GM12878 (cell line): ENCODE measurements at regions of chr1 and their contacts with region 1.

Region 1: DNA sequence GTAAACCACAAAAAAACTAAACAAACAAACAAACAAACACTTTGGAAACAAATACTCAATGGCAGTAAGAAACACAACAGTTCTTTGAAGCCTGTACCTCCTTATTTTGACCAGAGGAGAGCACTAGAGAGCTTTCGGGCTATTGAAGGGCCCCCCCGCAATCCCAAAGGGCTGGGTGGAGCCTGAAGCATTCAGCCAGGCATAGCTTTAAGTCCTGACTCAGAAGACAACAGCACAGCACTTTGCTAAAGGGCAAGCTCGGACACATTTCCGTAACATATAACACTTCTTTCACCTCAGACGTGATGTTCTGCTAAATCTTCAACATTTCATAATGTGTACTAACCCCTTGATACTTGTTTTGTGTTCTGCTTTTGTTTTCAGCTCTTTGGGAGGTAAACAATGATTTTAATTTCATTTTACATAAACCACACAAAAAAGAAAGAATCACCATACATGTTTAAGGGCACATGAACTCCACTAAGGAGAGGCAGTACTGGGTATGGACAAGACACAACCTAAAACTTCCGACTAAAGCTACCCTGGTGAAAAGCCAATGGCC is 9.7 kb upstream of the SHCBP1L start:
- DNase-seq: peak; percentile 62
- ATAC-seq: peak; percentile 100
- H3K4me3 ChIP-seq: peak overlapping the region; percentile 57; the same call in 1 of the 2 replicates
- H3K27ac ChIP-seq: peak overlapping the region; percentile 56
- H3K4me1 ChIP-seq: 0 out of 2 replicates have a peak, but pooled peaks cover 5% of the 10 kb centered on the region
- H3K27me3 ChIP-seq: no peaks in the 10 kb centered on the region
- CTCF ChIP-seq: peak; percentile 88 to 95 (median 93)
- EP300 ChIP-seq: no peak
- POLR2A ChIP-seq: peak; percentile 48; the same call in 1 of the 2 replicates
- RAD21 ChIP-seq: peak; percentile 99

Region 2: DNA sequence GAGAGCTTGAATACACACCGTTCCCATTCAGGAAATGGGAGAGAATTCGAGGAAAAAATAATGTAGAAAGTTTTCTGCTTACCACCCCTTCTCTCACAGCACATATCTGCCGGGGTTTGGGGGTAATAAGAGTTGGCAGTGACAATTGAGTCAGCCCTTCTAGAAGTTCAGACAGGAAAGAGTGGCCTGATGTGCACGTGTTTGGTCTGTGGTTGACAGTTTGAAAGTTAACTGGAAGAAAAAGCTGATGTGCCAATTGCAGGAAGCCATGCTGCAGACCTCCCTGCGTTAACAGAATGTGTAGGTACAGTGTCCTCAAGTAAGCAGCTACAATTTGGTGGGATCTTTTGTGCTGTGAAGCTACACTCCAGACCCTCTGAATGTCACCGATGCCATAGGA is 72.6 kb before region 1 on chr1:
- CTCF ChIA-PET with region 1: no interaction called
- POLR2A ChIA-PET with region 1: no interaction called
- RAD21 ChIA-PET with region 1: no interaction called
- SMC1A ChIA-PET with region 1: no interaction called
- in situ Hi-C with region 1: no loop called
- intact Hi-C with region 1: no loop called
- DNase-seq: no peak
- ATAC-seq: peak; percentile 41
- H3K4me3 ChIP-seq: no peak overlapping the region
- H3K27ac ChIP-seq: no peak overlapping the region
- H3K4me1 ChIP-seq: no peaks in the 10 kb centered on the region
- H3K27me3 ChIP-seq: no peaks in the 10 kb centered on the region
- CTCF ChIP-seq: no peak
- EP300 ChIP-seq: no peak
- POLR2A ChIP-seq: peak; percentile 43; the same call in 1 of the 2 replicates
- RAD21 ChIP-seq: no peak

Region 3: DNA sequence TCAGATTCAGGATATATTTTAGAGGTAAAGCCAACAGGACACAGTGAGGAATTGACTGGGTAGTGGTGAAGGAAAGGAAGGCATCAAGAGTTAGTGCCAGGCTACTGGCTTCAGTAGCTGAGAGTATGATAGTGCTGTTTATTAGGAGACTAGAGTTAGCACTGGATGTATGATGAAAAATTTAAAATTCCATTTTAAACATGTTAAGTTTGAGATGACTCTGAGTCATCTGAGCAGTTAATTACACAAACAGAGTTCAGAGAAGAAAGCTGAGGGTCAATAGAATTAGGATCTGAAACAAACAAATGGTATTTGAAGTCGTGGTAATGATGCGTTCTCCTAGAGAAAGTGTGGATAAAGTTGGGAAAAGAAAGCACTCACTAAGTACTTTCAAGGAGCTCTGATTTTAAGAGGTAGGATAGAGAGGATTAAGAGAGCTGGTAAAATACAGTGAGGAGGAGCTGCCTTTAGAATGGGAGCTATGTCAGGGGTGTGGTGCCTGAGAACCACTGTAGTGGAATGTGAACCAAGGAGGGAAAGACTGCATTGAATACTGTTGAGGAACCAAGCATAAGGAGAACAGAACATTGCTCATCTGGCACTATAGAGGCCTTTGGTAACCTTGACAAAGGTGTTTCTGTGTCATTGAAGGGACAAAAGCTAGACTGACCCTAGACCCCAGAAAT is 12.0 kb after region 1 on chr1:
- CTCF ChIA-PET with region 1: interaction called, 11 read pairs
- POLR2A ChIA-PET with region 1: interaction called, 5 read pairs
- RAD21 ChIA-PET with region 1: interaction called, 8 read pairs
- SMC1A ChIA-PET with region 1: interaction called, 12 read pairs
- in situ Hi-C with region 1: no loop called
- intact Hi-C with region 1: no loop called
- DNase-seq: no peak
- ATAC-seq: no peak
- H3K4me3 ChIP-seq: no peak overlapping the region
- H3K27ac ChIP-seq: no peak overlapping the region
- H3K4me1 ChIP-seq: no peaks in the 10 kb centered on the region
- H3K27me3 ChIP-seq: no peaks in the 10 kb centered on the region
- CTCF ChIP-seq: no peak
- EP300 ChIP-seq: no peak
- POLR2A ChIP-seq: no peak
- RAD21 ChIP-seq: no peak

Region 4: GRCh38 chr1:183070923-183071618 is 108.4 kb after region 1 on chr1:
- CTCF ChIA-PET with region 1: interaction called, 99 read pairs
- POLR2A ChIA-PET with region 1: interaction called, 7 read pairs
- RAD21 ChIA-PET with region 1: interaction called, 66 read pairs
- SMC1A ChIA-PET with region 1: interaction called, 76 read pairs
- in situ Hi-C with region 1: no loop called
- intact Hi-C with region 1: loop called (anchors 1 kb)
- DNase-seq: peak; percentile 94
- ATAC-seq: peak; percentile 90
- H3K4me3 ChIP-seq: peak overlapping the region; percentile 64
- H3K27ac ChIP-seq: peak overlapping the region; percentile 82
- H3K4me1 ChIP-seq: peaks cover 27% of the 10 kb centered on the region; the same call in 1 of the 2 replicates
- H3K27me3 ChIP-seq: no peaks in the 10 kb centered on the region
- CTCF ChIP-seq: peak in 1 of 3 experiments; percentile 36; a peak in 2 of 6 replicates
- EP300 ChIP-seq: peak; percentile 66 to 67; a peak in 2 of 4 replicates
- POLR2A ChIP-seq: no peak
- RAD21 ChIP-seq: peak; percentile 32

Region 5: GRCh38 chr1:183140633-183141032 is 178.0 kb after region 1 on chr1:
- CTCF ChIA-PET with region 1: interaction called, 4 read pairs
- POLR2A ChIA-PET with region 1: no interaction called
- RAD21 ChIA-PET with region 1: interaction called, 4 read pairs
- SMC1A ChIA-PET with region 1: interaction called, 14 read pairs
- in situ Hi-C with region 1: no loop called
- intact Hi-C with region 1: no loop called
- DNase-seq: no peak
- ATAC-seq: no peak
- H3K4me3 ChIP-seq: no peak overlapping the region
- H3K27ac ChIP-seq: no peak overlapping the region
- H3K4me1 ChIP-seq: no peaks in the 10 kb centered on the region; the same call in 1 of the 2 replicates
- H3K27me3 ChIP-seq: no peaks in the 10 kb centered on the region
- CTCF ChIP-seq: no peak
- EP300 ChIP-seq: no peak
- POLR2A ChIP-seq: no peak
- RAD21 ChIP-seq: no peak

Region 6: DNA sequence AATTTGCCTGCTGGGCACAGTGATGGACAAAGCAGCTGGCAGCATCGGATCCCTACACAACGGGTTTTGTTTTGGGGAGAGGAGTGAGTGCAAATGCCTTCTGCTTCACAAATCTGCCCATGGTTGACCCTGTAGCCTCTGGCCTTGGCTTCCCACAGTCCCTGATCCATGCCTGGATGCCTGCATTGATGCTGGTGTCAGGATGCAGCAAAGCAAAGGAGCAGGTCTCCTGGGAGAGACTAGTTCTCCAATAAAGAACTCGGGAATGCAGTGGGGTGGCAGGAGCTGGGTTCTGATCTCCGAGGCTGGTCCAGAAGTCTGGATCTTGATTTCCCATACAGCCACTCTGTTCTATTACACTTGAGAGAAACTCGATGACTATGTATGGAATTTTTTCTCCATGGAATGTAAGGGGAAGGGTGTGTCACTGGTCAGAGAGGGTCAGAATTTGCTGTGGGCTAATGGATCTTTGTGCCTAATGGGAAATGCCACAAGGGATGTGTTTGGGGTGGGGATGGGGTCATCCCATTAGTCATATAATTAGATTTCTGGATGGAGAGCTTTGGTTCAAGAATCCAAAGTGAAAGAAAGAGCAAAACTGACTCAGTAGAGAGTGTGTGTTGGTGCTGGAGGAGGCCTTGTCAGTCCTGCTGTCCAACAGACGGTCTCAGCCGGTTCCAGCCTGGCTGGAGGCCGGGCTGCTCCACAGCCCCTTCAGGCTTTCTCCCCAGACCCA is 309.6 kb after region 1 on chr1:
- CTCF ChIA-PET with region 1: interaction called, 77 read pairs
- POLR2A ChIA-PET with region 1: no interaction called
- RAD21 ChIA-PET with region 1: interaction called, 5 read pairs
- SMC1A ChIA-PET with region 1: interaction called, 15 read pairs
- in situ Hi-C with region 1: no loop called
- intact Hi-C with region 1: loop called (anchors 2 kb)
- DNase-seq: no peak
- ATAC-seq: no peak
- H3K4me3 ChIP-seq: no peak overlapping the region
- H3K27ac ChIP-seq: no peak overlapping the region
- H3K4me1 ChIP-seq: no peaks in the 10 kb centered on the region
- H3K27me3 ChIP-seq: no peaks in the 10 kb centered on the region; a peak in 1 of 4 replicates
- CTCF ChIP-seq: no peak
- EP300 ChIP-seq: no peak
- POLR2A ChIP-seq: no peak
- RAD21 ChIP-seq: no peak

Region 7: GRCh38 chr1:183318433-183318832 is 355.8 kb after region 1 on chr1:
- CTCF ChIA-PET with region 1: interaction called, 31 read pairs
- POLR2A ChIA-PET with region 1: no interaction called
- RAD21 ChIA-PET with region 1: interaction called, 17 read pairs
- SMC1A ChIA-PET with region 1: interaction called, 23 read pairs
- in situ Hi-C with region 1: no loop called
- intact Hi-C with region 1: loop called (anchors 1 kb)
- DNase-seq: peak; percentile 55
- ATAC-seq: peak; percentile 96
- H3K4me3 ChIP-seq: no peak overlapping the region
- H3K27ac ChIP-seq: no peak overlapping the region
- H3K4me1 ChIP-seq: peaks cover 6% of the 10 kb centered on the region
- H3K27me3 ChIP-seq: no peaks in the 10 kb centered on the region
- CTCF ChIP-seq: peak; percentile 44 to 92 (median 57); a peak in 5 of 6 replicates
- EP300 ChIP-seq: no peak
- POLR2A ChIP-seq: no peak
- RAD21 ChIP-seq: peak; percentile 82